CD14-positive monocyte (primary cell): ENCODE measurements at regions of chr7 and their contacts with region 1.

Region 1: GRCh38 chr7:12686894-12687717 is at the start of gene ARL4A:
- DNase-seq: peak; percentile 95 to 97 (median 95)
- H3K4me3 ChIP-seq: peak within 1 kb of the TSS; percentile 77 to 85 (median 77)
- H3K4me3 Mint-ChIP-seq: peak within 1 kb of the TSS; percentile 89 to 97
- H3K27ac ChIP-seq: peak within 1 kb of the TSS; percentile 90 to 94
- H3K27ac Mint-ChIP-seq: peak within 1 kb of the TSS; percentile 96 to 99 (median 97)
- H3K4me1 ChIP-seq: peaks cover 13 to 23% of the 10 kb centered on the region in 2 donors
- H3K4me1 Mint-ChIP-seq: peaks cover 39% of the 10 kb centered on the region
- H3K27me3 ChIP-seq: no peaks in the 10 kb centered on the region
- H3K27me3 Mint-ChIP-seq: peaks cover 0 to 5% (median 1%) of the 10 kb centered on the region in 3 donors
- CTCF ChIP-seq: peak; percentile 70
- polyA plus RNA-seq, gene ARL4A: 60.3 to 125 (median 69.3) TPM

Region 2: DNA sequence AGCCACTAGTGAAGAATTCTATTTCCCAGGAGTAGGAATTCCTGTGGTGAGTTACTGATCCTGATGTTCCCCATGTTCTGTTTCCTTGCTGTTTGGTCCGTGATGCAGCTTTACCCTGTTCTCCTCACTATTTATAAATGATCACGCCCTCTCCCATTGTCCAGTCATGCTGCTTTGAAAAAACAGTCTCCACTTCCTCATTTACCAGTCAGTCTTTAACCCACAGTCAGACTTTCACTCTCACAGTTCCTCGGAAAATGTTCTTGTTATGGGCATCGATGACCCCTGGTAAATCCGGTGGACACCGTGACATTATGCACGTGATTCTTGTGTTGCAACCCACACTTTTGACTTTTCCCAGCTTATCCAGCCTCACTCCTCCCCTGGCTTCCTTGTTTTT is 102.2 kb before region 1 on chr7:
- intact Hi-C with region 1: loop called (anchors 10 kb)
- DNase-seq: peak; percentile 81 to 94 (median 91)
- H3K4me3 ChIP-seq: peak overlapping the region in 1 of 3 experiments; percentile 48
- H3K4me3 Mint-ChIP-seq: peak overlapping the region; percentile 52 to 70
- H3K27ac ChIP-seq: peak overlapping the region; percentile 19 to 81
- H3K27ac Mint-ChIP-seq: peak overlapping the region; percentile 89 to 97 (median 94)
- H3K4me1 ChIP-seq: peaks cover 39 to 59% of the 10 kb centered on the region in 2 donors
- H3K4me1 Mint-ChIP-seq: peaks cover 44% of the 10 kb centered on the region
- H3K27me3 ChIP-seq: no peaks in the 10 kb centered on the region
- H3K27me3 Mint-ChIP-seq: peaks cover 0 to 2% (median 0%) of the 10 kb centered on the region in 3 donors
- CTCF ChIP-seq: no peak

Region 3: DNA sequence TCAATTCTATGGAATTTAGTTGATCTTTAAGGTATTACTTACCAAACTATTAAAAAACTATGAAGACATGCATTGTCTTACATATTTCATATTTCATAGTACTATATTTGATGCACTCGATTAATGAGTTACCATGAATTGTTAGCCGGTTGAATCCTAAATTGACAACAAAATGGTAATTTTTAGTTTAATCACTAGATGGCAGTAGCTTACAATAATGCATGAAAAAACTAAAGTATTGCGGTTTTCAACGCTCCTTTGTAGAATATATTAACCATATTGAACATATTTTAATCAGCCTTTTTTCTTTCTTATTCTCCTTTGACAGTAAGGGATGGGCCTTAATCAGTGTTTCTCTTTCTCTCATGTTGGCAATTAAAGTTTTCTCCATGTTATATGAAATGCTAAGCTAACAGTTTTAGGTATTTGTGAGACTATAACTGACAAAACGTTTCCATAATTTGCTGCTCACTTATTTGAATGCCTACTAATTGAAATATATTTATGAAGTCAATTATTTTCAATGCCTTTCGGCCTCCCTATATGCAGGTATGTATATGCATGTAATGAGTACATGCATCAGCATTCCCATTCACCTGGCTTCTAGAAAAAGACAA is 48.1 kb before region 1 on chr7:
- intact Hi-C with region 1: loop called in 1 of 2 experiments (anchors 5 kb)
- DNase-seq: peak; percentile 35 to 72 (median 35)
- H3K4me3 ChIP-seq: peak overlapping the region in 1 of 3 experiments; percentile 51
- H3K4me3 Mint-ChIP-seq: no peak overlapping the region
- H3K27ac ChIP-seq: peak overlapping the region in 1 of 2 donors; percentile 58
- H3K27ac Mint-ChIP-seq: peak overlapping the region in 1 of 7 donors; percentile 80
- H3K4me1 ChIP-seq: peaks cover 13 to 33% of the 10 kb centered on the region in 2 donors
- H3K4me1 Mint-ChIP-seq: peaks cover 22% of the 10 kb centered on the region
- H3K27me3 ChIP-seq: no peaks in the 10 kb centered on the region
- H3K27me3 Mint-ChIP-seq: no peaks in the 10 kb centered on the region
- CTCF ChIP-seq: peak; percentile 84

Region 4: DNA sequence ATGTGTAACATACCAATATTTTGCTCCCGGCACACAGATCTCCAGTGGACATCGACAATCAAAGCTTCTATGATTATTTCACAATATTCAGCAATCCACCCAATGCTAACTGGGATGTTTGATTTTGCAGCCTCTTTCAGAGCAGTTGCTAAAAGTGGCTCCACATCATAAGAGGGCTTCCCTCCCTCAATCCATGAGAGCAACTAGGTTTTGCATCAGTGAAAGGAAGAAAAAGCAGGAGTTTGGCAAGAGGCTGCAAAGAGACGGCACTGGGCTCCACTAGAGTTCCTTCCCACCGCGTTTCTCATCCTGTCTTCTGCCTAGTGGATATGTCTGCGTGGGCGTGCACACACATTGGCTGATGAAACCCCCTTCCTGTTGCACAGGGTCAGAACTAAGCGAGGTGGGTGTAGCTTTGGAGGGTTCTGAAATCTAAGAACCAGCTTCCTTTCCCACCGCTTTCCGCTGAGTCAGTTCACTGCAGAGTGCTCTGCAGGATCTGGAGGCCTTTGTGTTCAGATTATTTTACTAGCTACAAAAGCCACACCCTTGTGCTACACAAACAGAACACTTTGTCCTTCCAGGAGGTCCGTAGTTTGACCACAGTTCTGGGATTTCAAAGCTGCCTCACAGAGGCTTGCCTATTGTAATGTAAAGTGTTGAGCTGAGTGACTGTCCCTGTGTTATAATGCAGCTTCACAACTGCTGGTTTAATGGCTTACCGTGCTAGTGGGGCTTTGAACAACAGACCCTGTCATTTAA is 28.4 kb after region 1 on chr7:
- intact Hi-C with region 1: loop called (anchors 2 kb)
- DNase-seq: peak; percentile 55 to 65 (median 60)
- H3K4me3 ChIP-seq: peak overlapping the region in 2 of 3 experiments; percentile 1 to 53
- H3K4me3 Mint-ChIP-seq: peak overlapping the region; percentile 68 to 87
- H3K27ac ChIP-seq: peak overlapping the region; percentile 13 to 63
- H3K27ac Mint-ChIP-seq: peak overlapping the region; percentile 75 to 93 (median 84)
- H3K4me1 ChIP-seq: peaks cover 51 to 66% of the 10 kb centered on the region in 2 donors
- H3K4me1 Mint-ChIP-seq: peaks cover 58% of the 10 kb centered on the region
- H3K27me3 ChIP-seq: no peaks in the 10 kb centered on the region
- H3K27me3 Mint-ChIP-seq: peaks cover 0 to 1% (median 0%) of the 10 kb centered on the region in 3 donors
- CTCF ChIP-seq: no peak

Region 5: GRCh38 chr7:12754179-12754578 is 67.1 kb after region 1 on chr7:
- intact Hi-C with region 1: no loop called
- DNase-seq: no peak
- H3K4me3 ChIP-seq: no peak overlapping the region
- H3K4me3 Mint-ChIP-seq: no peak overlapping the region
- H3K27ac ChIP-seq: no peak overlapping the region
- H3K27ac Mint-ChIP-seq: peak overlapping the region in 1 of 7 donors; percentile 22
- H3K4me1 ChIP-seq: no peaks in the 10 kb centered on the region
- H3K4me1 Mint-ChIP-seq: peaks cover 3% of the 10 kb centered on the region
- H3K27me3 ChIP-seq: no peaks in the 10 kb centered on the region
- H3K27me3 Mint-ChIP-seq: peaks cover 0 to 2% (median 1%) of the 10 kb centered on the region in 3 donors
- CTCF ChIP-seq: no peak

Region 6: GRCh38 chr7:12888717-12889116 is 201.6 kb after region 1 on chr7:
- intact Hi-C with region 1: loop called in 1 of 2 experiments (anchors 10 kb)
- DNase-seq: no peak
- H3K4me3 ChIP-seq: no peak overlapping the region
- H3K4me3 Mint-ChIP-seq: no peak overlapping the region
- H3K27ac ChIP-seq: no peak overlapping the region
- H3K27ac Mint-ChIP-seq: no peak overlapping the region
- H3K4me1 ChIP-seq: no peaks in the 10 kb centered on the region
- H3K4me1 Mint-ChIP-seq: no peaks in the 10 kb centered on the region
- H3K27me3 ChIP-seq: no peaks in the 10 kb centered on the region
- H3K27me3 Mint-ChIP-seq: no peaks in the 10 kb centered on the region
- CTCF ChIP-seq: no peak

Region 7: DNA sequence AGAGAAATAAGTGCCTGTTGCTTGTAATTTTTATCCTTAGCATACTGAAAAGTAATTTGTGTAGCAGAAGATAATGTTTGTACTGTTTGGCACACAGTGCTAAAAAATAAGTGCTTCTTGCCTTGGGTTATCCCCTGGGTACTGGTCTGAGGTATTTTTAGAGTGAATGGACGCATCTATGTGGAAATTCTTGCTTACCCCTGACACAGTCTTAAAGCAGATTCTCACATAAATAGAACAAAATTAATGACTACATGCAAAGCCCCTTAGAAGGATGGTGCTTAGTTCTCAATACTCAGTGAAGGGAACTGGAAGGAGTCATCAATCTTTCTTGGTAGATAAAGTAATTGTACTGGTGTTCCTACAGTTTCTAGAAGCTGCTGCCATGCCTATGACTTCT is 548.9 kb after region 1 on chr7:
- intact Hi-C with region 1: no loop called
- DNase-seq: no peak
- H3K4me3 ChIP-seq: no peak overlapping the region
- H3K4me3 Mint-ChIP-seq: no peak overlapping the region
- H3K27ac ChIP-seq: no peak overlapping the region
- H3K27ac Mint-ChIP-seq: no peak overlapping the region
- H3K4me1 ChIP-seq: no peaks in the 10 kb centered on the region
- H3K4me1 Mint-ChIP-seq: no peaks in the 10 kb centered on the region
- H3K27me3 ChIP-seq: no peaks in the 10 kb centered on the region
- H3K27me3 Mint-ChIP-seq: peaks cover 0 to 2% (median 0%) of the 10 kb centered on the region in 3 donors
- CTCF ChIP-seq: no peak